Motor neuron (in vitro differentiated cells): ENCODE measurements at regions of chr11 and their contacts with region 1.

Region 1: GRCh38 chr11:62911137-62912130 is 9.7 kb downstream of the CHRM1 start:
- ATAC-seq: no peak
- H3K4me3 ChIP-seq: no peak overlapping the region
- H3K27ac ChIP-seq: no peak overlapping the region
- H3K4me1 ChIP-seq: no peaks in the 10 kb centered on the region

Region 2: DNA sequence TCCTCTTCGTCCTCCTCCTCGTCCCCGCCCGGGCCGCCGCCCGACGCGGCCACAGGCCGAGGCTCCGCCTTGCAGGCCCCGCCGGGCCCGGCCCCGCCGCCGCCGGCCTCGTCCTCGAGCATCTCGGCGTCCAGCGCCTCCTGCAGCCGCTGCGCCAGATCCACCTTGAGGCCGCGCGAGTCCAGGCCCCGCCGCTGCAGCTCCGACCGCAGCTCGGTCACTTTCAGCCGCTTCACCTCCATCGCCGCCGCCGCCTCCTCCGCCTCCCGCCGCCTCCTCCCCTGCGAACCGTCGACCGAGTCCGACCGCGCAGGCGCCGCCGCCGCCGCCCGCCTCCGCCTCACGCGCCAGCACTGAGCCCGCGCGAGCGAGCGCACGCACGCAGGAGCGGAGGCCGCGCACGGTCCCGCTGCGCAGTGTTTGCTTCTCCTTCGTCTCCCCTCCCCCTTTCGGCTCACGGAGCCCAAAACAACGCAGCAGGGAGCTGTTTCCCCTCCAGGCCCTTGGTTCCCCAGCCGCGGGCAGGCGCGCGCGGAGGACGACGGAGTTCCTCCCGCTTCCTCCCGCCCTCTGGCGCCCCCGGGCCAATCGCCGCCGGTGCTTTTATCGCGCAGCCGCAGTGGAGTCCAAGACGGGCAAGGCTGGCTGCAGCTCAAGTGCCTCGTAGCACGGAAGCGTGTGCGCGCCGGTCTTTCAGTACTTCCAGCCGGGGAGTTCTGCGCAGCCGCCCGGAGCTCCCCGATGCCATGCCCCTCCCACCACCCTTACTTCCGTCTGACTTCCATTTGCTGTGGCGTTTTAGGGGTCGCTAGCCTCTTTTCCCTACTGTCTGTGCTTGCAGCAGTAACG is 184.3 kb before region 1 on chr11 and contains the start of gene HNRNPUL2:
- in situ Hi-C with region 1: no loop called
- ATAC-seq: peak; percentile 74 to 87 (median 84)
- H3K4me3 ChIP-seq: peak within 1 kb of the TSS; percentile 54 to 91 (median 68)
- H3K27ac ChIP-seq: peak within 1 kb of the TSS; percentile 96 to 98
- H3K4me1 ChIP-seq: peaks cover 20 to 22% of the 10 kb centered on the region in 2 donors
- total RNA-seq, gene HNRNPUL2: 13.4 to 55.2 (median 27.8) TPM

Region 3: GRCh38 chr11:62999649-63000048 is 88.2 kb after region 1 on chr11:
- in situ Hi-C with region 1: loop called in 1 of 9 experiments (anchors 10 kb)
- ATAC-seq: no peak
- H3K4me3 ChIP-seq: no peak overlapping the region
- H3K27ac ChIP-seq: no peak overlapping the region
- H3K4me1 ChIP-seq: no peaks in the 10 kb centered on the region

Region 4: GRCh38 chr11:63146581-63146980 is 235.1 kb after region 1 on chr11:
- in situ Hi-C with region 1: no loop called
- ATAC-seq: no peak
- H3K4me3 ChIP-seq: no peak overlapping the region
- H3K27ac ChIP-seq: no peak overlapping the region
- H3K4me1 ChIP-seq: no peaks in the 10 kb centered on the region

Region 5: DNA sequence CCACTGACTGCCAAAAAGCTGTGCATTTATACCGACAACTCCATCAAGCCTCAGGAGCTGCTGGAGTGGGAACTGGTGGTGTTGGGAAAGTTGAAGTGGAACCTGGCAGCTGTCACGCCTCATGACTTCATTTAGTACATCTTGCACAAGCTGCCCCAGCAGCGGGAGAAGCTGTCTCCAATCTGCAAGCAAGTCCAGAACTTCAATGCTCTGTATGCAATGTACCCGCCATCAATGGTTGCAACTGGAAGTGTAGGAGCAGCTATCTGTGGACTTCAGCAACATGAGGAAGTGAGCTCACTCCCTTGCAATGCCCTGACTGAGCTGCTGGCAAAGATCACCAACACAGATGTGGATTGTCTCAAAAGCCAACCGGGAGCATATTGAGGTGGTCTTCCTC is 332.1 kb after region 1 on chr11 and contains the start of gene SLC22A25:
- in situ Hi-C with region 1: no loop called
- ATAC-seq: peak in 2 of 8 experiments; percentile 30 to 50
- H3K4me3 ChIP-seq: no peak within 1 kb of the TSS
- H3K27ac ChIP-seq: no peak within 1 kb of the TSS
- H3K4me1 ChIP-seq: no peaks in the 10 kb centered on the region
- total RNA-seq, gene SLC22A25: 0.05 to 0.13 (median 0.10) TPM in 3 of 8 experiments, not detected in the others

Region 6: GRCh38 chr11:63352144-63352543 is 440.7 kb after region 1 on chr11:
- in situ Hi-C with region 1: no loop called
- ATAC-seq: peak in 2 of 8 experiments; percentile 66 to 76
- H3K4me3 ChIP-seq: no peak overlapping the region
- H3K27ac ChIP-seq: no peak overlapping the region
- H3K4me1 ChIP-seq: no peaks in the 10 kb centered on the region